IMR-90 (cell line): ENCODE measurements at regions of chr6 and their contacts with region 1.

Region 1: DNA sequence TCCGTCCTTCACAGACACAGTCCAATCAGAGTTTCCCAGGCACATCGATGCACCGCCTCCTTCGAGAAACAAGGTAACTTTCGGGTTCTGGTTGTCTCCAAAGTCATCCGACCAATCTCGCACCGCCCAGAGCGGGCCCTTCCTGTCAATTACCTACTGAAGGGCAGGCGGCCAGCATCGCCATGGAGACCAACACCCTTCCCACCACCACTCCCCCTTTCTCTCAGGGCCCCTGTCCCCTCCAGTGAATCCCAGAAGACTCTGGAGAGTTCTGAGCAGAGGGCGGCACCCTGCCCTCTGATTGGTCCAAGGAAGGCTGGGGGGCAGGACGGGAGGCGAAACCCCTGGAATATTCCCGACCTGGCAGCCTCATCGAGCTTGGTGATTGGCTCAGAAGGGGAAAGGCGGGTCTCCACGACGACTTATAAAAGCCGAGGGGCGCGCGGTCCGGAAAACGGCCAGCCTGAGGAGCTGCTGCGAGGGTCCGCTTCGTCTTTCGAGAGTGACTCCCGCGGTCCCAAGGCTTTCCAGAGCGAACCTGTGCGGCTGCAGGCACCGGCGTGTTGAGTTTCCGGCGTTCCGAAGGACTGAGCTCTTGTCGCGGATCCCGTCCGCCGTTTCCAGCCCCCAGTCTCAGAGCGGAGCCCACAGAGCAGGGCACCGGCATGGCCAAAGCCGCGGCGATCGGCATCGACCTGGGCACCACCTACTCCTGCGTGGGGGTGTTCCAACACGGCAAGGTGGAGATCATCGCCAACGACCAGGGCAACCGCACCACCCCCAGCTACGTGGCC is at the start of gene HSPA1B:
- DNase-seq: peak; percentile 100
- ATAC-seq: peak; percentile 92
- H3K4me3 ChIP-seq: peak within 1 kb of the TSS; percentile 64
- H3K27ac ChIP-seq: peak within 1 kb of the TSS; percentile 93
- H3K4me1 ChIP-seq: peaks cover 9% of the 10 kb centered on the region
- H3K27me3 ChIP-seq: no peaks in the 10 kb centered on the region
- CTCF ChIP-seq: no peak
- POLR2A ChIP-seq: peak; percentile 99
- RAD21 ChIP-seq: no peak
- total RNA-seq, gene HSPA1B: 93.6 and 118 TPM in 2 replicates

Region 2: DNA sequence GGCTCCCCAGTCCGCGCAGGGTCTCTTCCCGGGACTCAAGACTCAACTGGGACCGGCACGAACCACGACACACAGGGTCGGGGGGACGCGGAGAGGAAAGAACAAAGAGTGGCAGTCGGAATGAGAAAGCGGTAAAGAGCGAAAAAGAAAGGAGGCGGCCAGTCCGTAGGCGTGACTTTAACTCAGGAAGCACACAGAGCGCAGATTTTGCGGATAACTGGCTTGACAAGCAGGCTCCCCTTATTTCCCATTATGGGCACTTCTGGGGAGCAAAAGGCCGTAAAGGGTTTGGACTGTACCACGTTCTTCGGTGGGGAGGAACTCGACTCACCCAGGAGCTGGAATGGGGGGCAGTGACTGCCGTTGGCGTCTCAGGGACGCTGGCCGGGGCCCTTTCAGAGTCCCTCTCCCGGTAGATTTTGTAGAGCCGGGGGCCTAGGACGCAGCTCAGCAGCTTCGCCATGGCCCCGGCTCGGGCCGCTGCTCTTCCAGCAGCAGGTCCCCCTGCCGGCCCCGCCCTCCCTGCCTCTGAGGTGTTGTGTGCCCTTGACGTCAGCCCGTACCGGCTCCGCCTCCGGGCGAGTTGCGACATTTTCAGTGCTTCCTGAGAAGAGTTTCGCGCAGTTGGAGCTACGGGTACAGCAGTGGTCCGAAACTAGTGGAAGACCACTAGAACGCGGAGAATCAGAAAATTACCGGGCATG is 124.5 kb before region 1 on chr6 and contains the start of gene ABHD16A:
- CTCF ChIA-PET with region 1: interaction called, 3 read pairs
- POLR2A ChIA-PET with region 1: interaction called, 3 read pairs
- dilution Hi-C with region 1: no loop called
- in situ Hi-C with region 1: no loop called
- intact Hi-C with region 1: loop called (anchors 2 kb)
- DNase-seq: peak; percentile 98
- ATAC-seq: peak; percentile 94
- H3K4me3 ChIP-seq: peak within 1 kb of the TSS; percentile 67
- H3K27ac ChIP-seq: peak within 1 kb of the TSS; percentile 82
- H3K4me1 ChIP-seq: peaks cover 6% of the 10 kb centered on the region
- H3K27me3 ChIP-seq: no peaks in the 10 kb centered on the region
- CTCF ChIP-seq: no peak
- POLR2A ChIP-seq: peak; percentile 91
- RAD21 ChIP-seq: no peak
- total RNA-seq, gene ABHD16A: 30.3 and 35.1 TPM in 2 replicates

Region 3: DNA sequence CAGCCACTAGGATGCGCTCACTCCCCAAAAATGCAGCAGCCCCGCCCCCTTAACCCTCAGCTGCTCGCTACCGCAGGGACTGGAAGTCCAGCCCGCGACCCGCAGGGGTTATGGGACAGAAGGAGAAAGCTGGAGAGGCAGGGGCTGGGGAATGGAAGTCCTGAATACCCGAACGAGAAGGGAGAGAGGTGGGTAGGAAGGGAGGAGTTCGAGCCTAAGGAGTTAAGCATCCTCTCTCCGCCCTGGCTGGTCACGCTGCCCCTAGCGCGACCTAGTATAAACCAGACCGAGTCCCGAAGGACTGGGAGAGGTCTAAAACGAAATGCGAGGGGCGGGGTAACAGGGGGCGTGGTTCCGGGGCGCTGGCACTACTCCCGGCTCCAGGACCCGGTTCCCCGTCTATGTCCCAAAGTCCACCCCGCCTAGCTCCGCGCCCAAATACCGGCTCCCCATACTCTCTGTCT is 97.9 kb before region 1 on chr6:
- CTCF ChIA-PET with region 1: no interaction called
- POLR2A ChIA-PET with region 1: interaction called, 3 read pairs
- dilution Hi-C with region 1: no loop called
- in situ Hi-C with region 1: no loop called
- intact Hi-C with region 1: loop called (anchors 2 kb)
- DNase-seq: peak; percentile 79
- ATAC-seq: peak; percentile 81
- H3K4me3 ChIP-seq: peak overlapping the region; percentile 85
- H3K27ac ChIP-seq: peak overlapping the region; percentile 85
- H3K4me1 ChIP-seq: peaks cover 7% of the 10 kb centered on the region
- H3K27me3 ChIP-seq: no peaks in the 10 kb centered on the region
- CTCF ChIP-seq: peak; percentile 67
- POLR2A ChIP-seq: no peak
- RAD21 ChIP-seq: peak; percentile 77

Region 4: GRCh38 chr6:31776989-31777666 is 50.4 kb before region 1 on chr6 and contains the start of gene VWA7:
- CTCF ChIA-PET with region 1: no interaction called
- POLR2A ChIA-PET with region 1: no interaction called
- dilution Hi-C with region 1: no loop called
- in situ Hi-C with region 1: no loop called
- intact Hi-C with region 1: loop called (anchors 1 kb)
- DNase-seq: peak; percentile 70
- ATAC-seq: peak; percentile 84
- H3K4me3 ChIP-seq: no peak within 1 kb of the TSS
- H3K27ac ChIP-seq: no peak within 1 kb of the TSS
- H3K4me1 ChIP-seq: peaks cover 10% of the 10 kb centered on the region
- H3K27me3 ChIP-seq: no peaks in the 10 kb centered on the region
- CTCF ChIP-seq: no peak
- POLR2A ChIP-seq: no peak
- RAD21 ChIP-seq: no peak
- total RNA-seq, gene VWA7: under 0.01 and 0.28 TPM in 2 replicates

Region 5: GRCh38 chr6:31795616-31796298 is 31.7 kb before region 1 on chr6 and contains the start of gene VARS1:
- CTCF ChIA-PET with region 1: interaction called, 4 read pairs
- POLR2A ChIA-PET with region 1: interaction called, 6 read pairs
- dilution Hi-C with region 1: no loop called
- in situ Hi-C with region 1: no loop called
- intact Hi-C with region 1: loop called (anchors 1 kb)
- DNase-seq: peak; percentile 84
- ATAC-seq: peak; percentile 96
- H3K4me3 ChIP-seq: peak within 1 kb of the TSS; percentile 77
- H3K27ac ChIP-seq: peak within 1 kb of the TSS; percentile 97
- H3K4me1 ChIP-seq: no peaks in the 10 kb centered on the region; the same call in 1 of the 2 replicates
- H3K27me3 ChIP-seq: no peaks in the 10 kb centered on the region
- CTCF ChIP-seq: peak; percentile 97
- POLR2A ChIP-seq: peak; percentile 44; the same call in 1 of the 2 replicates
- RAD21 ChIP-seq: peak; percentile 53
- total RNA-seq, gene VARS1: 32.2 and 41.2 TPM in 2 replicates

Region 6: DNA sequence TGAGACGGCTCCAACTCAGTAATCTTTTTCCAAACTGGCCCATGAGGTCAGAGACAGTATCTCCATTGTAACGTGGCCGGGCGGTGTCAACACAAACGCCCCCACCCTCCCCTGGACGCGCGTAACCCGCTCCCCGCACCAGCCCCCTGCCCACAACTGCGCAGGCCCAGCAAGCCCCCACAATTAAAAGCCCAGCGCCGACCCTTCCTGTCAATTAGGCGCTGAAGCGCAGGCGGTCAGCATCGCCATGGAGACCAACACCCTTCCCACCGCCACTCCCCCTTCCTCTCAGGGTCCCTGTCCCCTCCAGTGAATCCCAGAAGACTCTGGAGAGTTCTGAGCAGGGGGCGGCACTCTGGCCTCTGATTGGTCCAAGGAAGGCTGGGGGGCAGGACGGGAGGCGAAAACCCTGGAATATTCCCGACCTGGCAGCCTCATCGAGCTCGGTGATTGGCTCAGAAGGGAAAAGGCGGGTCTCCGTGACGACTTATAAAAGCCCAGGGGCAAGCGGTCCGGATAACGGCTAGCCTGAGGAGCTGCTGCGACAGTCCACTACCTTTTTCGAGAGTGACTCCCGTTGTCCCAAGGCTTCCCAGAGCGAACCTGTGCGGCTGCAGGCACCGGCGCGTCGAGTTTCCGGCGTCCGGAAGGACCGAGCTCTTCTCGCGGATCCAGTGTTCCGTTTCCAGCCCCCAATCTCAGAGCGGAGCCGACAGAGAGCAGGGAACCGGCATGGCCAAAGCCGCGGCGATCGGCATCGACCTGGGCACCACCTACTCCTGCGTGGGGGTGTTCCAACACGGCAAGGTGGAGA is 12.3 kb before region 1 on chr6 and contains the starts of genes HSPA1A and HSPA1L:
- CTCF ChIA-PET with region 1: no interaction called
- POLR2A ChIA-PET with region 1: interaction called, 10 read pairs
- dilution Hi-C with region 1: no loop called
- in situ Hi-C with region 1: no loop called
- intact Hi-C with region 1: no loop called
- DNase-seq: peak; percentile 95
- ATAC-seq: peak; percentile 89
- H3K4me3 ChIP-seq: peak within 1 kb of the TSS; percentile 66
- H3K27ac ChIP-seq: peak within 1 kb of the TSS; percentile 98
- H3K4me1 ChIP-seq: peaks cover 3% of the 10 kb centered on the region
- H3K27me3 ChIP-seq: no peaks in the 10 kb centered on the region
- CTCF ChIP-seq: no peak
- POLR2A ChIP-seq: peak; percentile 99
- RAD21 ChIP-seq: no peak
- total RNA-seq, gene HSPA1A: 94.6 and 102 TPM in 2 replicates
- total RNA-seq, gene HSPA1L: 1.3 and 1.4 TPM in 2 replicates

Region 7: DNA sequence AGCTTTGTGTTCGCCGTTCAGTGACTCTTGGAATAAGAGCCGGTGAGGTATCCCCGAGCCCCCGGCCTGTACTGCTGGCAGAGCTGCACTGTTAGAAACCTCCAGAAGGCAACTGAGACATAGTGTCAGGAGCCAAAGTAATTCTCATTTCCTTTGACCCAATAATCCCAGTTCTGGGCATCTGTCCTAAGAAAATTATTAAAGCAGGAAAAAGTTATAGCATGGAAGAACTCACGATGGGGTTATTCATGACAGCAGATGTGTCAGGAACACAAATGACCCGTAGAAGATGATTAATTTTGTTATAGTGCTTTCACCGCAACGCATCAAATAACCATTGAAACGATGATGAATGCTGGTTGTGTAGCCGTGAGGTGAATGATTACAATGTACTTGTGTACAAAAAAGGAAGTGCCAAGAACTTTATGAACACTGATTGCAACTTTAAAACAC is 231.1 kb after region 1 on chr6:
- CTCF ChIA-PET with region 1: no interaction called
- POLR2A ChIA-PET with region 1: no interaction called
- dilution Hi-C with region 1: no loop called
- in situ Hi-C with region 1: no loop called
- intact Hi-C with region 1: no loop called
- DNase-seq: no peak
- ATAC-seq: no peak
- H3K4me3 ChIP-seq: no peak overlapping the region
- H3K27ac ChIP-seq: no peak overlapping the region
- H3K4me1 ChIP-seq: no peaks in the 10 kb centered on the region
- H3K27me3 ChIP-seq: peaks cover 30% of the 10 kb centered on the region
- CTCF ChIP-seq: no peak
- POLR2A ChIP-seq: no peak
- RAD21 ChIP-seq: no peak